Naive thymus-derived CD4-positive, alpha-beta T cell (primary cell): ENCODE measurements at regions of chr14 and their contacts with region 1.

Region 1: DNA sequence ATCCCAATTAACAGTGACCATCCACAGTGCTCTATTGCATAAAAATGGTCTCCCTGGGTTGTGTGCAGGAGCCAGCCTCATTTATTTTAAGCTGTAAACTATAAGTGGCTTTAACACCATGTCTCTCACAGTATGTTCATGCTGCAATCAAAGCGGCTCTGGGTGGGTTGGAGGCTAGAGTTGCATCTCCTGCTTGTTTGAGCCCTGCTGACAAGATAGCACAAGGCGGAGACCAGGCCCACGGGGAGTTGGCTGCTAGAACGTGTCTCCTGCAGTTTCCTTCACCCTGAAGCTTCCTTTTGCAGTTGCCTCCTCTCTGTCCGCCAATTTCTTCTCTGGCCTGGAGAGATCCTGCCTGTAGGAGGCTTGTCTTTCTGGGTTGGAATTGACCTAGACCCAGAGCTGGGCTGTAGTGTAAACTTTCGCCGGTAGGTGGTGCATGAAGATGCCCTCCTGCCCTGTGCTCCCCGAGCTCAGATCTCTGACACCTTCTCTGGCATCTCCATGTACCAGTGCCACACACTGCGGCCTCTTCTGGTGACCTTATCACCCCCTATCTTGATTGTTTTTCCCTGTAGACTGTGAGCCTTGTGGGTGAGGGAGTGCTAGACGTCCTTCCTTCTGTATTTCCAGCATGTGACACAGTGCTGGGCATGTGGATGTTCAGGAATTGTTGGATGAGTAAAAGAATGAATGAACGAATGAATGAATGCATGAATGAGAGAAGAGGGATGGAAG is 10.3 kb downstream of the OTUB2 start:
- DNase-seq: peak; percentile 40 to 77 (median 64)
- ATAC-seq: peak; percentile 90
- H3K4me3 ChIP-seq: no peak overlapping the region
- H3K4me3 Mint-ChIP-seq: no peak overlapping the region
- H3K27ac ChIP-seq: no peak overlapping the region
- H3K27ac Mint-ChIP-seq: peak overlapping the region in 2 of 9 donors; percentile 8 to 78
- H3K4me1 ChIP-seq: no peaks in the 10 kb centered on the region
- H3K4me1 Mint-ChIP-seq: peaks cover 3 to 8% (median 4%) of the 10 kb centered on the region in 7 donors
- H3K27me3 ChIP-seq: no peaks in the 10 kb centered on the region
- H3K27me3 Mint-ChIP-seq: no peaks in the 10 kb centered on the region

Region 2: GRCh38 chr14:93959239-93960107 is 77.0 kb before region 1 on chr14:
- CTCF ChIA-PET with region 1: no interaction called
- POLR2A ChIA-PET with region 1: no interaction called
- intact Hi-C with region 1: no loop called
- DNase-seq: peak; percentile 59 to 93 (median 76)
- ATAC-seq: peak; percentile 87
- H3K4me3 ChIP-seq: peak overlapping the region; percentile 23
- H3K4me3 Mint-ChIP-seq: peak overlapping the region; percentile 57 to 87 (median 72)
- H3K27ac ChIP-seq: no peak overlapping the region
- H3K27ac Mint-ChIP-seq: peak overlapping the region; percentile 49 to 100 (median 85)
- H3K4me1 ChIP-seq: peaks cover 74 to 99% of the 10 kb centered on the region in 2 donors
- H3K4me1 Mint-ChIP-seq: peaks cover 63 to 96% (median 87%) of the 10 kb centered on the region in 7 donors
- H3K27me3 ChIP-seq: no peaks in the 10 kb centered on the region
- H3K27me3 Mint-ChIP-seq: no peaks in the 10 kb centered on the region

Region 3: DNA sequence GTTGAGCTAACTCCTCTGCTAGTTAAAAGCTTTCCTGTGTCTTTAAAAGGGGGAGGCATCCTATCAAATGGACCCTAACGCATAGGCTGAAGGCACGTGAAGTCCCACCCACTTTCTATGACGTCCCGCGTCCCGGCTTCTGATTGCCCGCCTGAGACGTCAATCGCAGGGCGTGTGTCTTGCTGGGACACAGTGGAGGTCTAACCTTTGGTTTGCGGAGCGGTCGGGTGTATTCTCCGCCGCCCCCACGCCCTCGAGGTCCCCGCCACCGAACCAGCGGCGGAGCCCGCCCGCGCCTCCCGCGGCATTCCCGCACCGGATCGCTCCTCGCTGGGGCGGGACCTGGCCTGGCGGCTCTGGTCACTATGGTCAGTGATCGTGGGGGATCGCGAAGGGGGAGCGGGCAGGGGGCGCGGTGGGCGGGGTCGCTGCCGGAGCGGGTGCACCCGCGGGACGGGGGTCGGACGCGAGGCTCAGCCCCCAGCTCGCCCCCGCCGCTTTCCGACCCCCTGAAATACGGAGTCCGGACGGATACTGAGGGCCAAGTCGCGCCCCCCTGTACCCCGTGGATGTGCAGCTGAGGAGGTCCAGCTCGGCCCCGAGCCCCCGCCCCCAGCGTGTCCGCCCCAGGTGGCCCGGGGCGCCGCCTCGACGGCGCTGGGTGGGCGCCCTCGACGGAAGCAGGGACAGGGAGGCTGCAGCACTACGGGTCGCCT is 10.2 kb before region 1 on chr14 and contains the start of gene OTUB2:
- CTCF ChIA-PET with region 1: interaction called, 14 read pairs
- POLR2A ChIA-PET with region 1: interaction called, 3 read pairs
- intact Hi-C with region 1: no loop called
- DNase-seq: peak; percentile 89 to 98 (median 96)
- ATAC-seq: peak; percentile 100
- H3K4me3 ChIP-seq: peak within 1 kb of the TSS; percentile 51
- H3K4me3 Mint-ChIP-seq: peak within 1 kb of the TSS; percentile 72 to 90 (median 82)
- H3K27ac ChIP-seq: no peak within 1 kb of the TSS
- H3K27ac Mint-ChIP-seq: peak within 1 kb of the TSS in 7 of 9 donors; percentile 20 to 75 (median 66)
- H3K4me1 ChIP-seq: peaks cover 5 to 12% of the 10 kb centered on the region in 2 donors
- H3K4me1 Mint-ChIP-seq: peaks cover 14 to 43% (median 18%) of the 10 kb centered on the region in 7 donors
- H3K27me3 ChIP-seq: no peaks in the 10 kb centered on the region
- H3K27me3 Mint-ChIP-seq: peaks cover 0 to 2% (median 0%) of the 10 kb centered on the region in 5 donors
- total RNA-seq, gene OTUB2: 0.11 to 2.5 (median 0.63) TPM in 4 of 5 experiments, not detected in the other

Region 4: GRCh38 chr14:94180655-94181271 is 144.3 kb after region 1 on chr14:
- CTCF ChIA-PET with region 1: interaction called, 74 read pairs
- POLR2A ChIA-PET with region 1: interaction called, 3 read pairs
- intact Hi-C with region 1: loop called (anchors 1 kb)
- DNase-seq: peak in 7 of 9 donors; percentile 57 to 81 (median 71)
- ATAC-seq: peak; percentile 93
- H3K4me3 ChIP-seq: peak overlapping the region; percentile 5
- H3K4me3 Mint-ChIP-seq: peak overlapping the region in 8 of 10 donors; percentile 6 to 75 (median 50)
- H3K27ac ChIP-seq: peak overlapping the region; percentile 56
- H3K27ac Mint-ChIP-seq: peak overlapping the region in 8 of 9 donors; percentile 16 to 90 (median 74)
- H3K4me1 ChIP-seq: peaks cover 0 to 1% of the 10 kb centered on the region in 2 donors
- H3K4me1 Mint-ChIP-seq: peaks cover 10 to 23% (median 18%) of the 10 kb centered on the region in 7 donors
- H3K27me3 ChIP-seq: no peaks in the 10 kb centered on the region
- H3K27me3 Mint-ChIP-seq: peaks cover 0 to 36% (median 0%) of the 10 kb centered on the region in 5 donors

Region 5: DNA sequence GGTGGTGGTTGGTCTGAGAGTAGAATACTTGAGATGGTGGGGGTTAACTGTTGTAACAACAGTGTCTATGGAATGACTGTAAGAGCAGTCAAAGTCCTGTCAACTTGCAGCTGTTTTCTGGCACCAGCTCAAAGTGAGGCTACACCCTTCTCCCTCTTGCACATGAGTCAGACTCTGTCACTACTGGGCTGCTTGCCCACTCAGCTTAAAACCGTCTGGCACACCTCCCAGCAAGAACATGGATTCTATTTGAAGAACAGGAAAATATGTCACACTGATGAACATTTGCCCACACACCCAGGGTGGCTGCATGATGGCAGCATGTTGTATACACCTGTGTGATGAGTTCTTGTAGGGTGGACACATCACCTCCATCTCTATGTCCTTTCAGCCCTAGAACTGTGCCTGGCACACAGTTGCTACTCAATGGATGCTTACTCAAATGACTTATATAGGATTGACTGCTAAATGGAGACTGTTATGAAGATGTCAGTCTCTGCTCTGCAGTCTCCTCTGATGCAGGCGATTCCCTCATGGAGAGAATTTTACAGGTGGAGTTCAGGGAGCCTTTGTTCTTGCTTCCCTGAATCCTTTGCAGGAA is 306.0 kb after region 1 on chr14:
- CTCF ChIA-PET with region 1: no interaction called
- POLR2A ChIA-PET with region 1: no interaction called
- intact Hi-C with region 1: no loop called
- DNase-seq: peak in 1 of 9 donors; percentile 1
- ATAC-seq: peak; percentile 39
- H3K4me3 ChIP-seq: no peak overlapping the region
- H3K4me3 Mint-ChIP-seq: no peak overlapping the region
- H3K27ac ChIP-seq: no peak overlapping the region
- H3K27ac Mint-ChIP-seq: no peak overlapping the region
- H3K4me1 ChIP-seq: peaks cover 0 to 5% of the 10 kb centered on the region in 2 donors
- H3K4me1 Mint-ChIP-seq: peaks cover 0 to 7% (median 0%) of the 10 kb centered on the region in 7 donors
- H3K27me3 ChIP-seq: no peaks in the 10 kb centered on the region
- H3K27me3 Mint-ChIP-seq: peaks cover 0 to 51% (median 35%) of the 10 kb centered on the region in 5 donors